Prostate gland (tissue), 2 donors: ENCODE measurements at regions of chr18 and their contacts with region 1.

Region 1: GRCh38 chr18:9614401-9615279 is at the start of gene PPP4R1:
- DNase-seq: peak; percentile 73
- H3K4me3 ChIP-seq: peak within 1 kb of the TSS; percentile 84 to 92
- H3K27ac ChIP-seq: peak within 1 kb of the TSS; percentile 91 to 97
- H3K4me1 ChIP-seq: no peaks in the 10 kb centered on the region
- H3K27me3 ChIP-seq: no peaks in the 10 kb centered on the region
- CTCF ChIP-seq: no peak
- POLR2A ChIP-seq: peak; percentile 43
- total RNA-seq, gene PPP4R1: 39.1 to 67.0 TPM

Region 2: GRCh38 chr18:9722691-9723090 is 108.1 kb after region 1 on chr18:
- intact Hi-C with region 1: no loop called
- DNase-seq: peak; percentile 73
- H3K4me3 ChIP-seq: no peak overlapping the region
- H3K27ac ChIP-seq: no peak overlapping the region
- H3K4me1 ChIP-seq: no peaks in the 10 kb centered on the region
- H3K27me3 ChIP-seq: no peaks in the 10 kb centered on the region
- CTCF ChIP-seq: peak in 3 of 4 experiments; percentile 43 to 77 (median 66)
- POLR2A ChIP-seq: no peak

Region 3: DNA sequence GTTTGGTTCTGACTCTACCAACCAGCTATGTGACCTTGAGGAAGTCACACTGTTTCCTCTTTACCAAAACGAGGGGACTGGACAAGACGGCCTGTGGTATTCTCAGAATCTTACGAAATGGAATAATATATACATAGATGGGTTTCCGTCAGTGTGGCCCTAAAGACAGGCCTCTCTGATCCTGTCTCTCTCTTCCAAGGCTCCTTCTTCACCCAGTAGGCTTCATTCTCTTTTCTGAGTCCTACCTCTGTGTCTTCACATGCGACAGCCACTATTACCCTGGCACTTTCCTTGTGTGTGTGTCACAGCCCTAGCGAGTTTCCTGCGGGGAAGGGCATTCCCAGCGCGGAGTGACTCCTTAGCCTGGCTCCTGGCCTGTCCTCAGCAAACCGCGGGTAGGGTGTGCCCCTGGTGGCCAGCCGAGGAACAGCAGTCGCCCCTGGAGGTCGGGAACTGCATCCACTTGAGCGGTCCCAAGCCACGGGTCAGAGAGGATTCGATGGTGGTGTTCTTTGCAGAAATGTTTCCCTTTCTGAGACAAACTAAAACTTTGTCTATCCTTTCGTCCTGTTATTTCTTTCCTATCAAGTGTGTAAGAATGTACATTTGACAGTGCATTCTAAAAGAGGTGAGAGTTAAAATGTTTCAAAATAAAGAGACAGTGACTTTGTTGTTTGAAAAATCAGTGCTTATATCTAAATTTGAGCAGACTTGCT is 156.8 kb after region 1 on chr18:
- intact Hi-C with region 1: loop called (anchors 5 kb)
- DNase-seq: peak; percentile 27
- H3K4me3 ChIP-seq: no peak overlapping the region
- H3K27ac ChIP-seq: no peak overlapping the region
- H3K4me1 ChIP-seq: no peaks in the 10 kb centered on the region
- H3K27me3 ChIP-seq: no peaks in the 10 kb centered on the region
- CTCF ChIP-seq: peak; percentile 65 to 84 (median 74)
- POLR2A ChIP-seq: no peak